ENCODE measurements at regions of chr12 and their contacts with region 1.

Region 1: GRCh38 chr12:92145731-92146496 is at the start of gene BTG1:
- DNase-seq: peak; percentile 96 to 100 (median 98)
- ATAC-seq: peak; percentile 68
- H3K4me3 ChIP-seq: peak within 1 kb of the TSS; percentile 94
- H3K4me3 Mint-ChIP-seq: peak within 1 kb of the TSS; percentile 100
- H3K27ac ChIP-seq: peak within 1 kb of the TSS; percentile 88 to 98
- H3K27ac Mint-ChIP-seq: peak within 1 kb of the TSS; percentile 99
- H3K4me1 ChIP-seq: peaks cover 4% of the 10 kb centered on the region
- H3K4me1 Mint-ChIP-seq: peaks cover 39% of the 10 kb centered on the region
- H3K27me3 ChIP-seq: no peaks in the 10 kb centered on the region
- H3K27me3 Mint-ChIP-seq: peaks cover 15% of the 10 kb centered on the region
- CTCF ChIP-seq: no peak
- total RNA-seq, gene BTG1: 1,698 to 1,774 TPM

Region 2: DNA sequence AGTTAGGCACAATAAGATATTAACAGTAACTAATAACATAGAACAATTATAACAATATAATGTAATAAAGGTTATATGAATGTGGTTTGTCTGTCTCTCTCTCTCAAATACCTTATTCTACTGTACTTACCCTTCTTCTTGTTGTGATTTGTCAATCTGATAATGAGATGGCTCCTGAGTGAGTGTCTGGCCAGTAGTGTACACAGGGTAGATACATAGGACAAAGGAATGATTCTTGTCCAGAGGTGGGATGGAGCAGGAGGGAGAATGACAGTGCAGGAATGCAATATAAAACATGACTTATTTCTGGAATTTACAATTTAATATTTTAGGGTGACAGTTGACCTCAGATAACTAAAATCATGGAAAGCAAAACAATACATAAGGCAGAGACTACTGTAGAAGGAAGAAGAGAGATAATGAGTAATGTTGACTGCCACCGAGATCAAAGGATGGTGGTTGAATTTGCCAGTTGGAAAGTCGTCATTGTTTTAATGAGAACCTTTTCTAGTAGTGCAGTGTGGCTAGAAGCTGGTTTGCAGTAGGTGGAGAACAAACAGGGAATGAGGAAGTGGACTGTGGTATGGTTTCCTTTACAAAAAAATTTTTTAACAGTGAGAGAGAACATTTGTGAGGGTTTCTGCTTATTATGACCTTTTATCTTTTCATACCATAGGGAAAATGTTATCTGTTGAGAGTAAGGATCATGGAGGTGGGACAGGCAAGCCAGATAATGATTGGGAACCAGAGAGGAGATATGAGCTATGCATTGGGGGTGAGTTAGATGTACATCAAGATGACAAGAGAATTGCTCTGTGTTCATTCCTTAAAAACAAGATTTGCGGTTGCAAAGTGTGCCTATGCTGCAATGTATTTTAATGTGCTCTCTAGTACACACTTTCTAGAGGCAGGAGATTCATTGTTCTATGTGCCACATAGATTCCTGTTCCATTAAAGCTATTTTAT is 458.6 kb before region 1 on chr12:
- CTCF ChIA-PET with region 1: no interaction called
- POLR2A ChIA-PET with region 1: interaction called, 4 read pairs
- intact Hi-C with region 1: loop called in 1 of 2 experiments (anchors 1 kb)
- DNase-seq: peak in 7 of 14 experiments; percentile 2 to 66 (median 52)
- ATAC-seq: peak; percentile 91
- H3K4me3 ChIP-seq: no peak overlapping the region
- H3K4me3 Mint-ChIP-seq: peak overlapping the region; percentile 5
- H3K27ac ChIP-seq: no peak overlapping the region
- H3K27ac Mint-ChIP-seq: peak overlapping the region; percentile 65
- H3K4me1 ChIP-seq: no peaks in the 10 kb centered on the region
- H3K4me1 Mint-ChIP-seq: peaks cover 23% of the 10 kb centered on the region
- H3K27me3 ChIP-seq: no peaks in the 10 kb centered on the region
- H3K27me3 Mint-ChIP-seq: no peaks in the 10 kb centered on the region
- CTCF ChIP-seq: no peak

Region 3: GRCh38 chr12:91792597-91792996 is 353.3 kb before region 1 on chr12:
- CTCF ChIA-PET with region 1: no interaction called
- POLR2A ChIA-PET with region 1: no interaction called
- intact Hi-C with region 1: no loop called
- DNase-seq: no peak
- ATAC-seq: no peak
- H3K4me3 ChIP-seq: no peak overlapping the region
- H3K4me3 Mint-ChIP-seq: no peak overlapping the region
- H3K27ac ChIP-seq: no peak overlapping the region
- H3K27ac Mint-ChIP-seq: no peak overlapping the region
- H3K4me1 ChIP-seq: no peaks in the 10 kb centered on the region
- H3K4me1 Mint-ChIP-seq: peaks cover 5% of the 10 kb centered on the region
- H3K27me3 ChIP-seq: no peaks in the 10 kb centered on the region
- H3K27me3 Mint-ChIP-seq: no peaks in the 10 kb centered on the region
- CTCF ChIP-seq: no peak

Region 4: DNA sequence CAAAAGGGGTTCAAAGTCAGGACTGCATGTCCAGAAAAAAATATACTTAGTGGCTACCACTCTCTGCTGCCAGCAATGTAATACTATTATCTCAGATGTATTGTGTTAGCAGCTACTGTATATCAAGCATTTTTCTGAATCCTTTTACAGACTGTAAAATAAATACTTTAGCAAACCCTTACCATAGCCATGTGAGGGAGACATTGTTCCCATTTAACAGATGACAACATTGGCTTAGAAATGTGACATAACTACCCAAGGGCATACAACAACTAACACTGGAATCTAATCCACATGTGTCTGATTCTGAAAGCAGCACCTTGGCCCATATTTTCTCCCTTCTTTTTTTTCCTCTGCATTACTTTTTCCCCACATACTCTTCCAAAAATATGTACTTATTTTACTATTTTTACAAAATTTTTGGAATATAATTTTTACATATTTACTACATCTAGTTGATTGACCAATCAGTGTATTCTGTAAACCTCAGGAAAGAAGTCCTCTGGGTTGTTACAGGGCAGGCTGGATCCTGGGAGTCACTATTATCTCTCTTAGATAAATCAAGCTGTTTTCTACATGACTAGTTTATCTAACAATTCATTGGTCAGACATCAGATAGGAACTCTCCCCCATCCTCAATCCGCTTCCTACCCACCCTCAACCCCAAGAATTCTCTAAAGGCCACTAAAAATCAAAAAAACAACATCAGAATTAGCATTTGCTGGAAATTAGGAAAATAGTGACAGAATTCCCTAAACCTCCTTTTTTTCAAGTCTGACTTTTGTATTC is 154.3 kb before region 1 on chr12:
- CTCF ChIA-PET with region 1: interaction called, 7 read pairs
- POLR2A ChIA-PET with region 1: interaction called, 112 read pairs
- intact Hi-C with region 1: loop called (anchors 1 to 2 kb)
- DNase-seq: peak in 3 of 14 experiments; percentile 72 to 79 (median 76)
- ATAC-seq: peak; percentile 89
- H3K4me3 ChIP-seq: no peak overlapping the region
- H3K4me3 Mint-ChIP-seq: peak overlapping the region; percentile 6
- H3K27ac ChIP-seq: no peak overlapping the region
- H3K27ac Mint-ChIP-seq: peak overlapping the region; percentile 59
- H3K4me1 ChIP-seq: peaks cover 3% of the 10 kb centered on the region
- H3K4me1 Mint-ChIP-seq: peaks cover 75% of the 10 kb centered on the region
- H3K27me3 ChIP-seq: no peaks in the 10 kb centered on the region
- H3K27me3 Mint-ChIP-seq: no peaks in the 10 kb centered on the region
- CTCF ChIP-seq: peak; percentile 58

Region 5: DNA sequence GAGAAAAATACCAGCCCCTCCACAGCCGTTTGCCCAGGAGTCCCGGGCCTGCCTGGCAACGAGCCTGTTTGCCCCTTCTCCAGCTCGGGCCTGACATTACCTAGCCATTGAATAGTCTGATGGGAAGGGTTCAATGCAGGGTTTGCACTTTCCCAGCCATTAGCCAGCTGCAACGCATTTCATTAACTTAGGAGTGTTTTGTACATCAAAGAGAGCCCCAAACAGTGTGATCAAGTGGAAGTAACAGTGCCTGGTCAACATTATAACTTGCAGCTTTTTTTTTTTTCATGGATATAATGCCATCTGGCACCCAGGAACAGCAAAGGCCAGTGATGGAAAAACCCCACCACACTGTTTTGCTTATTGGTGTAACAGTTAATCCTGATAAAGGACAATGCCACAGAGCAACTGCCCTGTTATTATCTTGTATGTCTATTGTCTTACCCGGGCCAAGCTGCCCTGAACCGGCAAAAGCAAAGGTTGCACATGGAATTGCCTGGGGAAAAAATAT is 38.2 kb before region 1 on chr12:
- CTCF ChIA-PET with region 1: no interaction called
- POLR2A ChIA-PET with region 1: interaction called, 16 read pairs
- intact Hi-C with region 1: no loop called
- DNase-seq: no peak
- ATAC-seq: no peak
- H3K4me3 ChIP-seq: no peak overlapping the region
- H3K4me3 Mint-ChIP-seq: peak overlapping the region; percentile 51
- H3K27ac ChIP-seq: no peak overlapping the region
- H3K27ac Mint-ChIP-seq: peak overlapping the region; percentile 42
- H3K4me1 ChIP-seq: peaks cover 27% of the 10 kb centered on the region
- H3K4me1 Mint-ChIP-seq: peaks cover 76% of the 10 kb centered on the region
- H3K27me3 ChIP-seq: no peaks in the 10 kb centered on the region
- H3K27me3 Mint-ChIP-seq: no peaks in the 10 kb centered on the region
- CTCF ChIP-seq: no peak

Region 6: DNA sequence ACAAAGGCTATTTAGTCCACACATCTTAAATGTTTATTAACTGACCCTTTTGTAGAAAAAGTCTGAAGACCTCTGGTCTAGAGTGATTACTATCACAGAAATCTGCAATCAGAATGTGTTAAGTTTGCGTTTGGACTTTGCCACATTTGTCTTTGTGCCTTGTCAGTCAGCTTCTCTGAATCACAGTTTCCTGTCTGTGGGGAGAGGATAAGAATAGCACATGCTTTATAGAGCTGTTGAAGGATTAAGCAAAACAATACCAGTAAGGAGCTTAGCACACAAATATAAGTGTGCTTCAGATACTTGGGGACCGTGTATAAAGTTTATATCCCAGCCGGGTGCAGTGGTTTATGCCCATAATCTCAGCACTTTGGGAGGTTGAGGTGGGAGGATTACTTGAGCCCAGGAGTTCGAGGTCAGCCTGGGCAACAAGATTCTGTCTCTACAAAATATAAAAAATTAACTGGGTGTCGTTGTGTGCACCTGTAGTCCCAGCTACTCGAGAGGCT is 62.8 kb after region 1 on chr12:
- CTCF ChIA-PET with region 1: interaction called, 5 read pairs
- POLR2A ChIA-PET with region 1: interaction called, 131 read pairs
- intact Hi-C with region 1: loop called (anchors 1 to 2 kb)
- DNase-seq: peak in 8 of 14 experiments; percentile 0 to 77 (median 31)
- ATAC-seq: peak; percentile 86
- H3K4me3 ChIP-seq: peak overlapping the region; percentile 43
- H3K4me3 Mint-ChIP-seq: peak overlapping the region; percentile 49
- H3K27ac ChIP-seq: peak overlapping the region; percentile 13 to 50
- H3K27ac Mint-ChIP-seq: peak overlapping the region; percentile 85
- H3K4me1 ChIP-seq: peaks cover 30% of the 10 kb centered on the region
- H3K4me1 Mint-ChIP-seq: peaks cover 41% of the 10 kb centered on the region
- H3K27me3 ChIP-seq: no peaks in the 10 kb centered on the region
- H3K27me3 Mint-ChIP-seq: no peaks in the 10 kb centered on the region
- CTCF ChIP-seq: no peak

Region 7: GRCh38 chr12:92369643-92370042 is 223.7 kb after region 1 on chr12:
- CTCF ChIA-PET with region 1: no interaction called
- POLR2A ChIA-PET with region 1: interaction called, 86 read pairs
- intact Hi-C with region 1: no loop called
- DNase-seq: no peak
- ATAC-seq: no peak
- H3K4me3 ChIP-seq: no peak overlapping the region
- H3K4me3 Mint-ChIP-seq: no peak overlapping the region
- H3K27ac ChIP-seq: no peak overlapping the region
- H3K27ac Mint-ChIP-seq: no peak overlapping the region
- H3K4me1 ChIP-seq: peaks cover 3% of the 10 kb centered on the region
- H3K4me1 Mint-ChIP-seq: peaks cover 36% of the 10 kb centered on the region
- H3K27me3 ChIP-seq: no peaks in the 10 kb centered on the region
- H3K27me3 Mint-ChIP-seq: no peaks in the 10 kb centered on the region
- CTCF ChIP-seq: no peak

Region 8: GRCh38 chr12:92570056-92570753 is 424.3 kb after region 1 on chr12:
- CTCF ChIA-PET with region 1: interaction called, 10 read pairs
- POLR2A ChIA-PET with region 1: interaction called, 98 read pairs
- intact Hi-C with region 1: loop called (anchors 1 to 5 kb)
- DNase-seq: peak in 9 of 14 experiments; percentile 20 to 83 (median 33)
- ATAC-seq: peak; percentile 95
- H3K4me3 ChIP-seq: no peak overlapping the region
- H3K4me3 Mint-ChIP-seq: no peak overlapping the region
- H3K27ac ChIP-seq: no peak overlapping the region
- H3K27ac Mint-ChIP-seq: no peak overlapping the region
- H3K4me1 ChIP-seq: no peaks in the 10 kb centered on the region
- H3K4me1 Mint-ChIP-seq: no peaks in the 10 kb centered on the region
- H3K27me3 ChIP-seq: no peaks in the 10 kb centered on the region
- H3K27me3 Mint-ChIP-seq: no peaks in the 10 kb centered on the region
- CTCF ChIP-seq: peak; percentile 96

Region 9: GRCh38 chr12:93115646-93116045 is 969.7 kb after region 1 on chr12:
- CTCF ChIA-PET with region 1: no interaction called
- POLR2A ChIA-PET with region 1: no interaction called
- intact Hi-C with region 1: no loop called
- DNase-seq: no peak
- ATAC-seq: no peak
- H3K4me3 ChIP-seq: no peak overlapping the region
- H3K4me3 Mint-ChIP-seq: no peak overlapping the region
- H3K27ac ChIP-seq: no peak overlapping the region
- H3K27ac Mint-ChIP-seq: no peak overlapping the region
- H3K4me1 ChIP-seq: no peaks in the 10 kb centered on the region
- H3K4me1 Mint-ChIP-seq: no peaks in the 10 kb centered on the region
- H3K27me3 ChIP-seq: peaks cover 0 to 3% of the 10 kb centered on the region in 2 experiments
- H3K27me3 Mint-ChIP-seq: no peaks in the 10 kb centered on the region
- CTCF ChIP-seq: no peak

Measured in CD4-positive, alpha-beta T cell (primary cell).